Heart left ventricle (tissue), 16 donors: ENCODE measurements at regions of chr19 and their contacts with region 1.

Region 1: DNA sequence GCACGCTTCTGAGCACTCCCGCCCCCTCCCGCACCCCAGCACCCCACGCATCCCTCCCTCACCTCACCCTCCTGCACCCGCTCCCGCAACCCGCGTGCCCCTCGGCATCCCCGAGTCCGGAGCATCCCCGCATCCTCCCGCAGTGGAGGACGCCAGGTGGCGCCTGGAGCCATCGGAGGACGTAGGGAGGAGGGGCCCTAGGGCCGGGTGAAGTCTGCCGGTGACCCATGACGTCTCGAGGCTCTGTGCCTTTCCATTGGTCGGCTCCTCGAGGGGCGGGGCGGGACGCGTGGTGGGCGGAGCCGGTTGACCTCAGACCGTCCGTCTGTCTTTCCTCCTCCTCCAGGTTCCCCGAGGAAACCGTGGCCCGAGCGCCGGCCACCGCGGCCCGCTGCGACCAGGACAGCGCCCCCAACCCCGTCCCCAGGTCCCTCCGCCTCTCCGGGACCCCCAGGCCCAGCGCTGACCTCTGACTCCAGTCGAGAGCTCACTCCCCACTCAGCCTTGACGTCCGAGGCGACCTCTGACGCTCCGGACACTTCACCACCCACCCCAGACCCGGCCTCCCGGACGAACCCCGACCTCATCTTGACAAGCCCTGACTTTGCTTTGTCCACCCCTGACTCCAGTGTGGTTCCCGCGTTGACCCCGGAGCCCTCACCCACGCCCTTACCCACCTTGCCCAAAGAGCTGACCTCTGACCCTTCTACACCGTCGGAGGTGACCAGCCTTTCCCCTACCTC is 19.9 kb downstream of the SBK2 start:
- DNase-seq: peak; percentile 92 to 97 (median 94)
- ATAC-seq: peak; percentile 99 to 100 (median 99)
- H3K4me3 ChIP-seq: peak overlapping the region; percentile 14 to 68 (median 58)
- H3K27ac ChIP-seq: peak overlapping the region; percentile 86 to 99 (median 94)
- H3K4me1 ChIP-seq: peaks cover 0 to 21% (median 5%) of the 10 kb centered on the region in 12 donors
- H3K27me3 ChIP-seq: no peaks in the 10 kb centered on the region
- CTCF ChIP-seq: peak; percentile 69 to 93 (median 84)
- POLR2A ChIP-seq: peak in 1 of 2 donors; percentile 77

Region 2: GRCh38 chr19:55452749-55453346 is 64.2 kb before region 1 on chr19:
- intact Hi-C with region 1: no loop called
- DNase-seq: peak; percentile 65 to 85 (median 72)
- ATAC-seq: peak; percentile 47 to 89 (median 78)
- H3K4me3 ChIP-seq: peak overlapping the region in 2 of 12 donors; percentile 21 to 29
- H3K27ac ChIP-seq: no peak overlapping the region
- H3K4me1 ChIP-seq: peaks cover 0 to 23% (median 11%) of the 10 kb centered on the region in 12 donors
- H3K27me3 ChIP-seq: peaks cover 14 to 35% (median 21%) of the 10 kb centered on the region in 9 donors
- CTCF ChIP-seq: peak in 2 of 12 donors; percentile 10 to 22
- POLR2A ChIP-seq: no peak

Region 3: DNA sequence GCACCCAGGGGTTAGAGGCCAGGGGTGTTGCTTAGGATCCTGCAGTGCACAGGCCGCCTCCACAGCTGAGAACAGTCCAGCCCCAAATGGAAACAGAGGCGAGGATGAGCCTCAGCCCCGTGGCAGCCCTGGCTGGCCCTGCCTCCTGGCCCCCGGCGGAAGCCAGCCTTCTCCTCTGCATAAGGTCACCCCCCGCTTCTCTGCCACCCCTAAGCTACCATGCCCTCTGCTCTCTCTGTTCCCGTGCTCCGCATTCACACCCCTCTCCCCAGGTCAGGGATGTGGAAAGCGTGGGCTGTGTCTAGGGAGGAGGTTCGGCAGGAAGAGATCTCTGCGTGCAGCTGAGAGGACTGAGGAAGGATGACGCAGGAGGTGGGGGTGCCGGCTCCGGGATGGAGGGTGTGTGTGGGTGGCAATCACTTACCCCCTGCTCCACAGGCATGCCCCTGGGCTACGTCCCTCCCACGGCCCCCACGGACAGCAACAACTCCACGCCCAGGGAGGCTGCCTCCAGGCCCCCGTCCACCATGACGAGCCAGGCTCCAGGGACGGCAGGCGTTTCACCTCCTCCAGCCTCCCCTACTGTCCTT is 22.8 kb before region 1 on chr19:
- intact Hi-C with region 1: no loop called
- DNase-seq: peak in 4 of 5 donors; percentile 78 to 86 (median 80)
- ATAC-seq: peak; percentile 63 to 93 (median 75)
- H3K4me3 ChIP-seq: peak overlapping the region; percentile 24 to 68 (median 48)
- H3K27ac ChIP-seq: peak overlapping the region; percentile 77 to 99 (median 86)
- H3K4me1 ChIP-seq: peaks cover 0 to 23% (median 14%) of the 10 kb centered on the region in 12 donors
- H3K27me3 ChIP-seq: peaks cover 0 to 11% (median 0%) of the 10 kb centered on the region in 9 donors
- CTCF ChIP-seq: no peak
- POLR2A ChIP-seq: peak in 1 of 2 donors; percentile 29

Region 4: DNA sequence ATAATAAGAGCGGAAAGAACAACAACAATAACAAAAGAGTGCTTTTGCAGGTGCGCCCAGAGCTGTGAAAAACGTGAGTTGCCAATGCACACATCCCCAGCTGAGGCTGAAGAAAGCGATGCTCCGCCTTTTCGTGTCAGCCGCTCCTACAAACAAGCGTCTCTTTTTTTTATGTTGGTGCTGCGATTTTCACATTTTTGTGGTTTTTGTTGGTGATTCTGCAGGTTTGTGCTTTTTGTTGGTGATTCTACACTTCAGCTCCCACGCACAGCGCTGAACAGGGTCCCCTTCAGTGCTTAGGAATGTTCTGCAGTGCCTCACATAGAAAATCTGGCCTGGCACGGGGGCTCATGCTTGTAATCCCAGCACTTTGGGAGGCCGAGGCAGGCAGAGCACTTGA is 35.6 kb after region 1 on chr19:
- intact Hi-C with region 1: no loop called
- DNase-seq: peak in 1 of 5 donors; percentile 7
- ATAC-seq: no peak
- H3K4me3 ChIP-seq: no peak overlapping the region
- H3K27ac ChIP-seq: no peak overlapping the region
- H3K4me1 ChIP-seq: peaks cover 0 to 21% (median 11%) of the 10 kb centered on the region in 12 donors
- H3K27me3 ChIP-seq: peaks cover 0 to 6% (median 0%) of the 10 kb centered on the region in 9 donors
- CTCF ChIP-seq: no peak
- POLR2A ChIP-seq: no peak

Region 5: DNA sequence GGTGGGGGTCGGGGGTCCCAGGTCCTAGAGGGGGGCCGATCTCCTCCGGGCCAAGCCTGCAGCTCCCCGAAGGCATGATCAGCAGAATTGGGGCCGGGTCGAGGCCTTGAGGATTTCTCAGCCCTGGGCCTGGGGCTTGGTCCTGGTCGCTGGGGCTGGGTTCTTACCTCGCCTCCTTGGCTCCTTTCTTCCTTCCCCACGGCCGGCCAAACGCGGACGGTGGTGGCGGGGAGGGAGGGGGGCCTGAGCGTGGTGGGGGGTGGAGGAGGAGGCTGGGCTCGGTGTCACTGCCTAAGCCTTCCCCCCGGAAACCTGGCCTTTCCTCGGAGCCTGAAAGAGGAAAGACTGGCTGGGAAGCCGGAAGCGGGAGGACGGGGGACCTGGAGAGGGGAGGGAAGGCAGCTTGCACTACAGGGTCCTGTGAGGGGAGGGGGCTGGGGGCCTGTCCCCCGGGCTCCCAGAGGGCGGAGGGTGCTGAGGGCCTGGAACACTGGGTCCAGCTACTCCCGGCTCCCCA is 63.6 kb after region 1 on chr19 and contains the start of gene ZNF579:
- intact Hi-C with region 1: loop called in 3 of 10 experiments (anchors 2 to 5 kb)
- DNase-seq: peak; percentile 89 to 91 (median 90)
- ATAC-seq: peak; percentile 78 to 92 (median 86)
- H3K4me3 ChIP-seq: peak within 1 kb of the TSS; percentile 74 to 97 (median 90)
- H3K27ac ChIP-seq: peak within 1 kb of the TSS; percentile 89 to 99 (median 94)
- H3K4me1 ChIP-seq: peaks cover 0 to 25% (median 12%) of the 10 kb centered on the region in 12 donors
- H3K27me3 ChIP-seq: peaks cover 0 to 3% (median 0%) of the 10 kb centered on the region in 9 donors
- CTCF ChIP-seq: no peak
- POLR2A ChIP-seq: no peak
- total RNA-seq, gene ZNF579: 5.4 to 13.9 (median 9.8) TPM

Region 6: DNA sequence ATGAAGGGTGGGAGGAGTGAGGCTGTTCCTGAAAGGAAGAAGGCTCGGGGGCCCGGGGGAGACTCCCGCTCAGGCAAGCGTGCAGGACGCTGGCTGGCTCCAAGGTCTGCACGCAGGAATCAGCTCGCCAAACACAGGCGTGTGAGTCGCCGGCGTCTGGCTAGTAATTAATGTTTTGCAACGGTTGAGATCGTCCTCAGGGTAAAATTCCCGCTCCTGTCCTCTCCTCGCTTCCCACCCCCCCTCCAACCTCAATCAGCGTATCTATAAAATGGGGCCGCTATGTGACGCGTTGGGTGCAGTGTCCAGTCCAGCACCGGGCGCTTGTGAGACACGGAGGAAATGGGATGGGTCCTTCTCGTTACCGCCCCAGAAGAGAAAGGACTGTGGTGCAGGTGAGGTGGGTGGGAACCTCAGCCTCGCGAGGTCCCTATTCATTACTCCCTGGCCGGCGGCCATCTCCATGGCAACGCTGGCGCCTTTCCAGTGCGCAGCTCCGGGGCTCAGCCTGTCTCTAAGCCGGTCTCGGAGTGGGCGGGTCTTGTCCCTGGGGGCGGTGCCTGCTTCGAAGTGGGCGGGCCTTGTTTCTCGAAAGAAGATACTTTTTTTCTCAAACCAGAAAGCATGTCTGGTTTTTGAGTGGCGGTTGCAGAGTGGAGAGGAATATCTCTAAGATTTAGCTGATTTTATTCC is 70.1 kb after region 1 on chr19:
- intact Hi-C with region 1: loop called in 3 of 10 experiments (anchors 5 to 10 kb)
- DNase-seq: peak; percentile 94 to 97 (median 95)
- ATAC-seq: peak; percentile 83 to 94 (median 88)
- H3K4me3 ChIP-seq: peak overlapping the region in 10 of 12 donors; percentile 20 to 49 (median 42)
- H3K27ac ChIP-seq: peak overlapping the region in 6 of 12 donors; percentile 9 to 82 (median 24)
- H3K4me1 ChIP-seq: peaks cover 0 to 27% (median 19%) of the 10 kb centered on the region in 12 donors
- H3K27me3 ChIP-seq: peaks cover 0 to 10% (median 0%) of the 10 kb centered on the region in 9 donors
- CTCF ChIP-seq: no peak
- POLR2A ChIP-seq: no peak

Region 7: GRCh38 chr19:55599468-55600279 is 82.6 kb after region 1 on chr19 and contains the start of gene FIZ1:
- intact Hi-C with region 1: loop called in 6 of 10 experiments (anchors 2 to 10 kb)
- DNase-seq: peak; percentile 98 to 99 (median 99)
- ATAC-seq: peak; percentile 87 to 96 (median 94)
- H3K4me3 ChIP-seq: peak within 1 kb of the TSS; percentile 62 to 99 (median 86)
- H3K27ac ChIP-seq: peak within 1 kb of the TSS; percentile 92 to 100 (median 99)
- H3K4me1 ChIP-seq: peaks cover 1 to 28% (median 14%) of the 10 kb centered on the region in 12 donors
- H3K27me3 ChIP-seq: no peaks in the 10 kb centered on the region
- CTCF ChIP-seq: no peak
- POLR2A ChIP-seq: no peak
- total RNA-seq, gene FIZ1: 11.2 to 15.4 (median 12.9) TPM

Region 8: GRCh38 chr19:55605207-55605636 is 88.2 kb after region 1 on chr19:
- intact Hi-C with region 1: loop called in 7 of 10 experiments (anchors 1 to 5 kb)
- DNase-seq: peak; percentile 98 to 99 (median 99)
- ATAC-seq: peak; percentile 84 to 92 (median 86)
- H3K4me3 ChIP-seq: peak overlapping the region; percentile 72 to 96 (median 83)
- H3K27ac ChIP-seq: peak overlapping the region; percentile 90 to 98 (median 96)
- H3K4me1 ChIP-seq: peaks cover 4 to 46% (median 31%) of the 10 kb centered on the region in 12 donors
- H3K27me3 ChIP-seq: no peaks in the 10 kb centered on the region
- CTCF ChIP-seq: no peak
- POLR2A ChIP-seq: peak in 1 of 2 donors; percentile 53

Region 9: GRCh38 chr19:55624109-55625003 is 107.3 kb after region 1 on chr19 and contains the start of gene ZNF784:
- intact Hi-C with region 1: loop called in 2 of 10 experiments (anchors 5 kb)
- DNase-seq: peak; percentile 92 to 98 (median 94)
- ATAC-seq: peak; percentile 87 to 97 (median 92)
- H3K4me3 ChIP-seq: peak within 1 kb of the TSS; percentile 7 to 73 (median 63)
- H3K27ac ChIP-seq: peak within 1 kb of the TSS; percentile 78 to 96 (median 92)
- H3K4me1 ChIP-seq: peaks cover 0 to 45% (median 11%) of the 10 kb centered on the region in 12 donors
- H3K27me3 ChIP-seq: no peaks in the 10 kb centered on the region
- CTCF ChIP-seq: no peak
- POLR2A ChIP-seq: peak in 1 of 2 donors; percentile 42
- total RNA-seq, gene ZNF784: 6.7 to 15.8 (median 9.2) TPM